GM10248 (cell line): ENCODE measurements at regions of chr7 and their contacts with region 1.

Region 1: DNA sequence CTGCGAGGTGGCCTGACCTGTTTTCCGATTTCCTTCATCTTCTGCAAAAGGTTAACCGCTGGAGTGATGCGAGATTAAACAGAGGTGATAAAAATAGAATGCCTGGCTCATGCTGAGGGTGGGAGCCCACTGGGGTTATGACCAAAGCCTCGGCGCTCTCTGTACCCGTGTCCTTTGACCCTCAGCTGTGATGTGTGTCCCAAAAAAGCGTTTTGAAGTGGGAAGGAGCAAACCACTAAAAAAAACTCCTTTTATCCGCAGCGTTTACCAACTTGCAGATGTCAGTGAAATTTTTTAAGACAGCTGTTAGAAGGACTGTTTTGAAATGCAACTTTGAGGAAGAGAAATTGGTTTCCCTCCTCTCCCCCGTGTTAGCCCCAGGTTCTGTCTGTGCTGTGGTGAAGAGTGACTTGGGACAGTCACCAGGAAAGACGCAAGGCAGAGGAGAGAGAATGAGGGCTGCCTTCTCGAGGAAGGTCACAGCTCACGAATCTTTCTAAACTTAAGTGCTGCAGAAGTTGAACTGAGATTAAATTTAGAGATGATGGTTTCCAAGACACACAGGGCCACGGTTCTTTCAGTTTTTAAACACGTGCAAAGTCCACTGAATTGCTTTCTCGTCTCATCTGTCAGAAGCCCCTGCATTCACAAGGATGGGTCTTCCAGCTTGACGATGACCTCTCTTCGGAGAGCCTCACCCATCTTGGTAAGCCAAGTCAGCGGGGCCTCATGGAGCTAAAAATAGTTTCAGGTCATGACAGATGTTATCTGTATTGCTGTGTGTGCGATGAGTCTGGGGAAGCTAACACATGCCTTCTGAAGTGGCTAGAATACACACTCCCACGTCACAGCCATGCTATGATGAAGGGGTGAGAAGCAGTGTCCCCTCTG is 27.6 kb downstream of the AMZ1 start:
- DNase-seq: no peak
- CTCF ChIP-seq: no peak

Region 2: DNA sequence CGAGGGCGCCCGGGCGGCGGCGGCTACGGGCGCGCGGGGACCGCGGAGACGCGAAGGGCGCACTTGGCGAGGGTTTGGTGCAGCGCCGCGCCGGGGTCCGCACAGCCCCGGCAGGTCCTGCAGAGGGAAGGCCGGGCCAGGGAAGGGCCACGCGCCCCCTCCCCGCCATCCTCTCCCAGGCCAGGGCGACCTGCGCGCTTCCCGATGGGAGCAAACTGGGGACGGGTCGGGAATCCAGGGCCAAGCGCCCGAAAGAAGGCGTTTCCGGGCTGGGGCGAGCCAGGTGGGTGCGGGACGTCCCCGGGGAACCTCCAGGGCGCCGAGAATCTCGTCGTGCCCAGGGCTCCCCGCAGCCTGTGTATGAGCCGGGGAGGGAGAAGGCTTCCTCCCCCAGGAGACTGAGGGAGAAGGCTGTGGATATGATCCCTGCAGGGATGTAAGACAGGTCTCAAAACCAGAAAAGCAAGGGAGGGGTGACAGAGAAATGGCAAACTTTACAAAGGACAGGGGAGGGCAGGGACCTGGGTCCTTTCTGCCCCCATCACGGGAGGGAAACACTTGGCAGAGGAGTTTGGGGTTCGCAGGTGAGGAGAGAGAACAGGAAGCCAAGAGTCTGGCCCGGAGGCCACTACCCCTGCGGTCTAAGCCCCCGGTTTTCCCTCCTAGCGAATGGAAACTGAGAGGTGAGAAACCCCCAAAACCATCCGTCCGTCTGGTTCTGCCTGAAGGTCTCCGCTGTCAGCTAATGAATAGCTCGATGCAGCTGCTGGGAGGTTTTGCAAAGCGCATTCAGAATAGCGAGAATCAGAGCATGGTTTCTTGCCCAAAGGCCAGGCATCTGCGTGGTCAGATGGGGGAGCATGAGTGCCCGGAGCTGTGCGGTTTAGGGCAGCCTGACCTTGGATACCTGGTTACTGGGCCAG is 26.9 kb before region 1 on chr7:
- CTCF ChIA-PET with region 1: interaction called, 35 read pairs
- POLR2A ChIA-PET with region 1: no interaction called
- DNase-seq: peak; percentile 78
- CTCF ChIP-seq: no peak

Region 3: GRCh38 chr7:2807845-2808772 is 92.5 kb after region 1 on chr7:
- CTCF ChIA-PET with region 1: no interaction called
- POLR2A ChIA-PET with region 1: no interaction called
- DNase-seq: peak; percentile 62
- CTCF ChIP-seq: no peak

Region 4: DNA sequence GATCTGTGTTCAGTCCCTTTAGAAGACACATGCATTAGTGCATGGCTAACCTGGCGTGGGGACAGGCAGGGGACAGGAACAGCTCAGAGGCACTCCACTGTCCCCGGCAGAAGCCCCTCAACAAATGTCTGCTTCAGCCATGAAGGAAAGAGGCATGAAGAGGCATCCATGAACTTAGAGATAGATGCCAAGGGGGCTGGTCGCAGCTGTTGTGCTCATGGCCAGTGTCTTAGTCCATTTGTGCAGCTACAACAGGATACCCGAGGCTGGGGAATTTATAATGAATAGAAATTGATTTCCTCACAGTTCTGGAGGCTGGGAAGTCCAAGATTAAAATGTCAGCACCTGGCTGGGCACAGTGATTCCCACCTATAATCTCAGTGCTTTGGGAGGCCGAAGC is 143.0 kb after region 1 on chr7:
- CTCF ChIA-PET with region 1: no interaction called
- POLR2A ChIA-PET with region 1: no interaction called
- DNase-seq: no peak
- CTCF ChIP-seq: no peak